ENCODE measurements at regions of chr2 and their contacts with region 1.

Region 1: DNA sequence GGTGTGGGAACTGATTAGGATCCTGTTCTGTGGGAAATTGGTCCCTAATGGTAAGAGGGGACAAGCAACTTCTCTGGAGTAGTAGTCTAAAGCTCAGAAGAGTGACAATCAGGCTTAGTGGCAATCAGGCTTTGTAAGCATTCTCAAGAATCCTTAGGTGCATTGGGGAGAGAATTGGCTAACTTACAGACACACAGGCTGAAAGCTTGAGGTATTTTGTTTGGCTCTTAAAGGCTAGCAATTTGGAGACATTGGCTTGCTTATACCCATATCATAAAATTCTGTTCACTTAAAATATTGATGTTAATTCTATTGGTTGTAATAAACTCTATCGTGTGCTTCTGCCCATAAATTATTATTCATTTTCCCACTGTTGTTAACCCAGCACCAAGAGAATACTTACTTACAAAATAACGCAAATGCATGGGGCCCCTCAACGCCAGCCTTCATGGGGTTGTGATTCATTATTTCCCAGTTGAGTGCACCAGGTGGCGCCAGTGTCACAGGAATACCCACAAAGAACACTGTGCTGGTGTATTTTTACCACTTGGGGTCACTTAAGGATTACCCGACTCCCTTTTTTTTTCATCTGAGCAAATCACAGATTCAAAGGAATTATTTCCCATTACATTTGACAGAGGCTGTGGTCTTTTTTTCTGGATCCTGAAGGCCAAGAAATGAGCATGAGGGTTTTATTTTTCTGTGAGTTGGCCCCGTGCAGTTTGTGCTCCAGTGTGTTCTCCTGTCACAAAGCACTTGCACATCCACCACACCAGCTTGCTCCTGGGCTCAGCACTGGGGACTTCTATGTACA is 45.5 kb downstream of the DDX1 start:
- DNase-seq: peak; percentile 73 to 91
- H3K4me3 ChIP-seq: no peak overlapping the region
- H3K27ac ChIP-seq: no peak overlapping the region
- H3K4me1 ChIP-seq: peaks cover 0 to 46% (median 10%) of the 10 kb centered on the region in 4 donors
- H3K27me3 ChIP-seq: no peaks in the 10 kb centered on the region
- CTCF ChIP-seq: peak in 5 of 7 experiments; percentile 53 to 86 (median 80)
- EP300 ChIP-seq: no peak
- POLR2A ChIP-seq: no peak

Region 2: GRCh38 chr2:15733856-15734673 is 96.9 kb after region 1 on chr2:
- intact Hi-C with region 1: no loop called
- DNase-seq: peak; percentile 30 to 61
- H3K4me3 ChIP-seq: no peak overlapping the region
- H3K27ac ChIP-seq: no peak overlapping the region
- H3K4me1 ChIP-seq: peaks cover 25 to 59% (median 42%) of the 10 kb centered on the region in 4 donors
- H3K27me3 ChIP-seq: peaks cover 0 to 8% (median 0%) of the 10 kb centered on the region in 3 donors
- CTCF ChIP-seq: no peak
- EP300 ChIP-seq: no peak
- POLR2A ChIP-seq: no peak

Region 3: DNA sequence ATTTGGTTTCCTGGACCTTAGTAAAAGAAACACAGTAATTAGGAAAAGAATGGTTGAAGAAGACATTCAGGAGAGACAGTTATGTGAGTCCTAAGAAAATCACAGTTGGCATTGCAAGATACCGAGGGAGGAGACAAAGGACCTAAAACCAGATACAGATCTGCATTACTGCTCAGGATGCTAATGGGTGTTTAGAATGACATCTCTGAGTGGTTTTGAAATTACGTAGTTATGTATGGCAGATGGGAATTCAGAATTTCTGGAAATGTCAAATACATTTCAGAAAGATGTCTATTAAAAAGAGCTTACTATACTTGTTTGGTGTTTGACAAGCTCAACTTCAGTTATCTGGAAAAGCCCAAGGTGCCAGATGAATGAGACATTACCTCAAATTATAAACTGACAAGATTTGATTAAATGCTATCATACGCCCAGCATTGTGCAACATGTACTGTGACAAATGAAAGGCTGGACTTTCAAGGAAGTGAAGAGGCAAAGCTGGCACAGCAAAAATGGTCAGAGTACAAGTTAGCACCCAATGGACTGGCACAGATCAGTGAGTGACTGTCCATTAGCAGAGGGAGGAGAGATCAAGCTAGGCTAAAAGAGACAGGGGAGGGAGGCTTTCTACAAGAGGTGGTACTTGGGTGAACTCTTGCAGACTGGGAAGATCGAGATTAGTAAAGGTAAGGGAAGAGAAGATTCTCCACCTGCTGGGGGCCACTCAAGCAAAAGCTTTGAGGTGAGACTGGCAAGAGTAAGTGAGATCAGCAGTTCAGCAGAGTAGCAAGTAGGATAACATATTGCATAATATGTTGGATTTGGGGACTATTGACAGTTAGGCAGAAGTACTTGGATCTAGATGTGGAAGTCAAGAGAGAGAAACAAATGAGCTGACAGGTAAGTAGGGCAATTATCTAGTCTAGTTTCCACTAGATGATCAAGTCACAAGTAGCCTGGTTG is 859.5 kb after region 1 on chr2:
- intact Hi-C with region 1: loop called (anchors 10 kb)
- DNase-seq: no peak
- H3K4me3 ChIP-seq: no peak overlapping the region
- H3K27ac ChIP-seq: no peak overlapping the region
- H3K4me1 ChIP-seq: no peaks in the 10 kb centered on the region
- H3K27me3 ChIP-seq: no peaks in the 10 kb centered on the region
- CTCF ChIP-seq: no peak
- EP300 ChIP-seq: no peak
- POLR2A ChIP-seq: no peak

Measured in stomach (tissue), 19 donors.